Endothelial cell of umbilical vein (primary cell): ENCODE measurements at regions of chr5 and their contacts with region 1.

Region 1: GRCh38 chr5:82165740-82166530 is 112.2 kb downstream of the RPS23 start:
- DNase-seq: peak; percentile 86
- H3K4me3 ChIP-seq: no peak overlapping the region
- H3K27ac ChIP-seq: peak overlapping the region; percentile 17
- H3K4me1 ChIP-seq: peaks cover 26% of the 10 kb centered on the region
- H3K27me3 ChIP-seq: no peaks in the 10 kb centered on the region
- CTCF ChIP-seq: peak; percentile 60 to 64
- POLR2A ChIP-seq: no peak

Region 2: GRCh38 chr5:81506900-81507588 is 658.9 kb before region 1 on chr5:
- CTCF ChIA-PET with region 1: interaction called, 53 read pairs
- POLR2A ChIA-PET with region 1: no interaction called
- dilution Hi-C with region 1: no loop called
- intact Hi-C with region 1: loop called (anchors 1 kb)
- DNase-seq: peak; percentile 94
- H3K4me3 ChIP-seq: no peak overlapping the region
- H3K27ac ChIP-seq: no peak overlapping the region
- H3K4me1 ChIP-seq: peaks cover 14% of the 10 kb centered on the region
- H3K27me3 ChIP-seq: no peaks in the 10 kb centered on the region
- CTCF ChIP-seq: peak; percentile 78
- POLR2A ChIP-seq: no peak

Region 3: DNA sequence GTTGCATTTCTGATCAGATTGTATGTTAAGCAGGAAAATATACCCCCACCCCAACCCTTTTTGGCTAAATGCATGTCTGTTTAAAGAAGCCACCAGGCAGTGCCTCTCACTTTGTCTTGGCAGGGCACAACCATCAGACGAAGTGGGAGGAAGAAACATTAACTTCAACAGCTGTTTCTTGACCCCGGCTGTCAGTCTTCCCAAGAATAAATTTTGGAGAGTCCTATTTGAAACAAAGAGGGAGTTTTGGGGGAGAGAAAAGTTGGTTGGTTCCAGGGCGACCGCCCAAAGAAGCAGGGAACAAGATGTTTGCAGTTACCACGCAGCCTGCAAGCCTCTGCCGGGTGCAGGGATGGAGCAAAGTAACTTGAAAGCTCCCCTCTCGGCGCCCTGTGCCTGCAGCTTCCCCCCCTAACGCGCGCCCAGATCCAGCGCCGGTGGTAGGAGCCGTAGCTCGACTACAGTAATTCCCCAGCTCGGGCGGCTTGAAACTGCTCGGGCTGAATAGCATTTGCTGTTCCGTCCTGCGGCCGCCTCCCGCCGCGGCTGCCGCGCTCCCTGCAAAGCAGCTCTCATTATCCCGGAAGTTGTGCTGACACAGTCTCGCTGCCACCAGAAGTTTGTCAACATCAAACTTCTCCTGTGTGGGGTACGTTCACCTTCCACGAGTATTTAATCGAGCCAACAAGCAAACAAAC is 314.3 kb before region 1 on chr5:
- CTCF ChIA-PET with region 1: interaction called, 48 read pairs
- POLR2A ChIA-PET with region 1: no interaction called
- dilution Hi-C with region 1: no loop called
- intact Hi-C with region 1: loop called (anchors 1 kb)
- DNase-seq: peak; percentile 94
- H3K4me3 ChIP-seq: peak overlapping the region in 2 of 3 experiments; percentile 40 to 54
- H3K27ac ChIP-seq: peak overlapping the region; percentile 65
- H3K4me1 ChIP-seq: peaks cover 10% of the 10 kb centered on the region
- H3K27me3 ChIP-seq: no peaks in the 10 kb centered on the region
- CTCF ChIP-seq: no peak
- POLR2A ChIP-seq: peak; percentile 88

Region 4: GRCh38 chr5:81971712-81972495 is 194.0 kb before region 1 on chr5 and contains the start of gene ATG10:
- CTCF ChIA-PET with region 1: interaction called, 5 read pairs
- POLR2A ChIA-PET with region 1: no interaction called
- dilution Hi-C with region 1: no loop called
- intact Hi-C with region 1: loop called (anchors 2 kb)
- DNase-seq: peak; percentile 96
- H3K4me3 ChIP-seq: peak within 1 kb of the TSS; percentile 64 to 89 (median 71)
- H3K27ac ChIP-seq: peak within 1 kb of the TSS; percentile 71
- H3K4me1 ChIP-seq: no peaks in the 10 kb centered on the region
- H3K27me3 ChIP-seq: no peaks in the 10 kb centered on the region
- CTCF ChIP-seq: no peak
- POLR2A ChIP-seq: peak; percentile 89
- total RNA-seq, gene ATG10: 3.9 and 5.9 TPM in 2 replicates

Region 5: GRCh38 chr5:82211855-82212572 is 46.1 kb after region 1 on chr5:
- CTCF ChIA-PET with region 1: no interaction called
- POLR2A ChIA-PET with region 1: no interaction called
- dilution Hi-C with region 1: no loop called
- intact Hi-C with region 1: no loop called
- DNase-seq: no peak
- H3K4me3 ChIP-seq: no peak overlapping the region
- H3K27ac ChIP-seq: no peak overlapping the region
- H3K4me1 ChIP-seq: no peaks in the 10 kb centered on the region
- H3K27me3 ChIP-seq: no peaks in the 10 kb centered on the region
- CTCF ChIP-seq: no peak
- POLR2A ChIP-seq: no peak

Region 6: GRCh38 chr5:82334856-82335255 is 168.9 kb after region 1 on chr5:
- CTCF ChIA-PET with region 1: no interaction called
- POLR2A ChIA-PET with region 1: no interaction called
- dilution Hi-C with region 1: no loop called
- intact Hi-C with region 1: no loop called
- DNase-seq: no peak
- H3K4me3 ChIP-seq: no peak overlapping the region
- H3K27ac ChIP-seq: no peak overlapping the region
- H3K4me1 ChIP-seq: no peaks in the 10 kb centered on the region
- H3K27me3 ChIP-seq: peaks cover 6 to 8% of the 10 kb centered on the region in 2 experiments
- CTCF ChIP-seq: no peak
- POLR2A ChIP-seq: no peak